ENCODE measurements at regions of chr5 and their contacts with region 1.

Region 1: GRCh38 chr5:78269088-78269703 is 25.3 kb downstream of the AP3B1 start:
- DNase-seq: no peak
- ATAC-seq: peak; percentile 66
- H3K4me3 ChIP-seq: no peak overlapping the region
- H3K27ac ChIP-seq: no peak overlapping the region
- H3K4me1 ChIP-seq: no peaks in the 10 kb centered on the region
- H3K27me3 ChIP-seq: no peaks in the 10 kb centered on the region
- CTCF ChIP-seq: peak; percentile 15 to 62 (median 40); a peak in 4 of 6 replicates
- POLR2A ChIP-seq: no peak
- RAD21 ChIP-seq: peak; percentile 48

Region 2: DNA sequence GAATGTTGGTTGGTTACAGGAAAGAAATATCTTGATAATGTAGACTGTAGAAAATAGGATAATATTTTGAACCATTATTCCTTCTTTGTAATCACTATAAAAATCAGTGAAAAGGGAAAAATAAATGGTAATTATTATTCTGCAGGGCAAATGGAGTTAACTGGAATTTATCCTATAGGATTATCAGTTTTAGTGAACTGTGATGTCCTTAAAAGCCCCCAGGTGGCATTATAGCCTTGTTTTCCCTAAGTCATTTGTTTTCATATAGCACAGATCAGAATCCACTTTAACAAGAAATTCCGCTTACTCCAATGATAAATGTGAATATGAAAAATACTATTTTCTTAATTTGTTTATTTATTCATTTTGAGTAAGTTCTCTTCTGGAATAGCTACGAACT is 750.9 kb before region 1 on chr5:
- CTCF ChIA-PET with region 1: no interaction called
- POLR2A ChIA-PET with region 1: no interaction called
- RAD21 ChIA-PET with region 1: no interaction called
- intact Hi-C with region 1: loop called (anchors 2 kb)
- DNase-seq: peak; percentile 23
- ATAC-seq: peak; percentile 68
- H3K4me3 ChIP-seq: no peak overlapping the region
- H3K27ac ChIP-seq: no peak overlapping the region
- H3K4me1 ChIP-seq: no peaks in the 10 kb centered on the region
- H3K27me3 ChIP-seq: no peaks in the 10 kb centered on the region
- CTCF ChIP-seq: peak; percentile 34 to 51 (median 40); a peak in 5 of 6 replicates
- POLR2A ChIP-seq: no peak
- RAD21 ChIP-seq: peak; percentile 60

Region 3: DNA sequence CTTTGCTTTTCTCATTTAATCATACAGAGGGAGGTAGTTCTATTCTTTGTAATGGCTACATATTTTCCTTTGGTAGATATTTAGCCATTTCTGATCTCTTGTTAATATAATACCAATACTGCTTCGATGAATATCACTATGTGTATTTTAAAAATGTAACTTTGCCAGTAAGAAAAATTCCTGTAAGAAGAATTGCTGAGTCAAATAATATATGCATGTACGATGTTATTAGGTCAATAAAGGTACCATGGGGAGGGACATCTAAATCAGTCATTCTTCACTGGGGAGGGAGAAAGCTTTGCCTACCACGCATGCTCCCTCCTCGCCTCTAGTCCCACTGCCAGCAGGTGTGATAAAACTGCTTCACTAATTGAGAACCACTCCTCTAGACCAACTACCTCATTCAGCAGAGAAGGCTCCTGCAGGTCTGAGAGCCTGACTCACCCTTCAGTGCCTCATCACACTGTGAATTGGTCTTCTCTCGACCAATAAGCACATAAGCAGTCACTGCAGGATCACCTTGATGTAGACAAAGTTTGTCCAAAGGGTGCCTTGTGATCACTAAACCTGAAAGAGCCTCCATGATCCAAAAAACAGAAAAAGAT is 436.9 kb before region 1 on chr5:
- CTCF ChIA-PET with region 1: no interaction called
- POLR2A ChIA-PET with region 1: no interaction called
- RAD21 ChIA-PET with region 1: no interaction called
- intact Hi-C with region 1: no loop called
- DNase-seq: no peak
- ATAC-seq: no peak
- H3K4me3 ChIP-seq: no peak overlapping the region
- H3K27ac ChIP-seq: no peak overlapping the region
- H3K4me1 ChIP-seq: no peaks in the 10 kb centered on the region
- H3K27me3 ChIP-seq: no peaks in the 10 kb centered on the region
- CTCF ChIP-seq: no peak
- POLR2A ChIP-seq: no peak
- RAD21 ChIP-seq: no peak